Heart right ventricle (tissue), 16 donors: ENCODE measurements at regions of chr9 and their contacts with region 1.

Region 1: GRCh38 chr9:92877531-92878430 is at the start of gene ZNF484:
- DNase-seq: peak; percentile 94 to 98
- ATAC-seq: peak; percentile 100
- H3K4me3 ChIP-seq: peak within 1 kb of the TSS; percentile 4 to 70 (median 60)
- H3K27ac ChIP-seq: peak within 1 kb of the TSS in 9 of 10 donors; percentile 46 to 91 (median 76)
- H3K4me1 ChIP-seq: peaks cover 0 to 21% (median 8%) of the 10 kb centered on the region in 9 donors
- H3K27me3 ChIP-seq: no peaks in the 10 kb centered on the region
- CTCF ChIP-seq: no peak
- total RNA-seq, gene ZNF484: 4.8 to 7.8 (median 6.6) TPM

Region 2: GRCh38 chr9:92808726-92809451 is 68.9 kb before region 1 on chr9:
- intact Hi-C with region 1: no loop called
- DNase-seq: peak; percentile 53 to 70
- ATAC-seq: peak; percentile 77 to 89 (median 81)
- H3K4me3 ChIP-seq: peak overlapping the region in 8 of 10 donors; percentile 8 to 40 (median 30)
- H3K27ac ChIP-seq: no peak overlapping the region
- H3K4me1 ChIP-seq: peaks cover 3 to 35% (median 28%) of the 10 kb centered on the region in 9 donors
- H3K27me3 ChIP-seq: peaks cover 32 to 100% (median 99%) of the 10 kb centered on the region in 7 donors
- CTCF ChIP-seq: peak in 6 of 9 donors; percentile 13 to 42 (median 30)

Region 3: GRCh38 chr9:92911511-92912475 is 34.0 kb after region 1 on chr9:
- intact Hi-C with region 1: no loop called
- DNase-seq: no peak
- ATAC-seq: no peak
- H3K4me3 ChIP-seq: no peak overlapping the region
- H3K27ac ChIP-seq: no peak overlapping the region
- H3K4me1 ChIP-seq: no peaks in the 10 kb centered on the region
- H3K27me3 ChIP-seq: peaks cover 7 to 57% (median 25%) of the 10 kb centered on the region in 7 donors
- CTCF ChIP-seq: no peak

Region 4: DNA sequence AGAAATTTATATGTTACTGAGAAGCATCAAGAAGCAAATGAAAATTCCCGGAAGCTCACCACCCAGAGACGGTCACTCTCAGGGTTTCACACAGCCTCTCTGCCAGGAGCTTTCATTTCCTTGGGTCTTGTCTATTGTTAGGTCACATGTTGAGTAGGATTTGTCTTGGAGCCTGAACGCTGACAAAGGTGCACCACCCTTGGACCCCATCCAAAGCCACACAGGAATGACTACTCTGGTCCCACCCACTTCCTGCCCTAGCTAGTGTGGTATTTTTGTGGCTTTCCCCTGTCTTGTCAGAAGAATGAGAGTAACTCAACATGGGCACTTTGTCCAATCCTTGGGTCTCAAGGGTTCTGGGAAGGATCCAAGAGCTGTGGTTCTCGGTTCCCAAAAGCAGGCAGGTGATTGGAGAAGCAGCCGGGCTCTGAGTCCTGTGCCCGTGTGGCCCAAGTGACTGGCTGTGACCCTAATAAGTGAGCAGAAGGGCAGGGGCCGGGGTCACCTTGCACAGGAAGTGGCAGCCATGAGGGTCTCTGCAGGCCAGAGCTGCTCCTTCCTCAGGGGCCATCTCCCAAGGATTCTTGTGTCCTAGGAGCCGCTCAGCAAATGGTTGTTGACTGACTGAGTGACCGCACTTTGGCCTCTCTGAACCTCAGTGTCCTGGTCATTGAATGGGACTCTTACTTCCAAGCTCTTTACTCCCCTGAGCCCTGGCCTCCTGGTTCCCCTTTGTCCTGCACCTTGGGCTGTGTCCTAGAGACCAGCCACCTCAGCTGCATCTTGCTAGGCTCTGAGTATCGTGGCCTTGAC is 76.5 kb after region 1 on chr9:
- intact Hi-C with region 1: loop called in 1 of 10 experiments (anchors 10 kb)
- DNase-seq: peak in 1 of 2 donors; percentile 85
- ATAC-seq: peak; percentile 74 to 92 (median 90)
- H3K4me3 ChIP-seq: peak overlapping the region in 3 of 10 donors; percentile 4 to 24 (median 11)
- H3K27ac ChIP-seq: peak overlapping the region; percentile 21 to 80 (median 72)
- H3K4me1 ChIP-seq: peaks cover 2 to 24% (median 13%) of the 10 kb centered on the region in 9 donors
- H3K27me3 ChIP-seq: peaks cover 0 to 53% (median 25%) of the 10 kb centered on the region in 7 donors
- CTCF ChIP-seq: no peak

Region 5: GRCh38 chr9:93111371-93112115 is 233.8 kb after region 1 on chr9:
- intact Hi-C with region 1: no loop called
- DNase-seq: no peak
- ATAC-seq: no peak
- H3K4me3 ChIP-seq: no peak overlapping the region
- H3K27ac ChIP-seq: peak overlapping the region in 3 of 10 donors; percentile 31 to 88 (median 70)
- H3K4me1 ChIP-seq: peaks cover 0 to 68% (median 5%) of the 10 kb centered on the region in 9 donors
- H3K27me3 ChIP-seq: no peaks in the 10 kb centered on the region
- CTCF ChIP-seq: no peak